Esophagus muscularis mucosa (tissue), 4 donors: ENCODE measurements at regions of chr18 and their contacts with region 1.

Region 1: GRCh38 chr18:26226229-26227005 is at the start of gene TAF4B:
- DNase-seq: peak; percentile 99
- H3K4me3 ChIP-seq: peak within 1 kb of the TSS; percentile 66 to 89 (median 80)
- H3K27ac ChIP-seq: peak within 1 kb of the TSS; percentile 79 to 91 (median 84)
- H3K4me1 ChIP-seq: peaks cover 0 to 33% (median 28%) of the 10 kb centered on the region in 4 donors
- H3K27me3 ChIP-seq: no peaks in the 10 kb centered on the region
- CTCF ChIP-seq: peak in 1 of 3 experiments; percentile 7
- EP300 ChIP-seq: no peak
- POLR2A ChIP-seq: no peak
- total RNA-seq, gene TAF4B: 5.2 to 14.1 (median 8.1) TPM

Region 2: DNA sequence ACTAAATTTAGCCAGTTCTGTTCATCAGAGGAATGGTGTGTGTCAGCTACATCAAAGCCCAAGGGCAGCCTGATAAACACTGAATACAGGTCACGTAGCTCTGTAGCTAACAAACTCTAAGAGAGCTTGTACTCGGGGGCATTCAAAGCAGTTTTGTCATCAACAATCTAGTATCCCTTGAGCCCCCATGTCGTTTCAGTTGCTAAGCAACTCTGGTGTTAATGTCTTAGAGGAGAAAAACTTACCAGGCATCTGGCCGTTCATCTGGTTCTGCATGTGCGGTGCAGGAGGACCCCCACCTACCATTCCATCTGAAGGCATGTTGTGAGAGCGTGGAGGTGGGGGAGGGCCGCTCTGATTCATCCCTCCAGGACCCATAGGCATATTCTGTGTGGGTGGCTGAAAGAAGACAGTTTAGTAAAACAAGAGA is 169.1 kb before region 1 on chr18:
- intact Hi-C with region 1: no loop called
- DNase-seq: no peak
- H3K4me3 ChIP-seq: no peak overlapping the region
- H3K27ac ChIP-seq: no peak overlapping the region
- H3K4me1 ChIP-seq: peaks cover 0 to 4% (median 0%) of the 10 kb centered on the region in 4 donors
- H3K27me3 ChIP-seq: no peaks in the 10 kb centered on the region
- CTCF ChIP-seq: no peak
- EP300 ChIP-seq: no peak
- POLR2A ChIP-seq: no peak

Region 3: GRCh38 chr18:26090130-26091046 is 136.0 kb before region 1 on chr18 and contains the start of gene SS18:
- intact Hi-C with region 1: loop called (anchors 2 kb)
- DNase-seq: peak; percentile 97
- H3K4me3 ChIP-seq: peak within 1 kb of the TSS; percentile 80 to 96 (median 84)
- H3K27ac ChIP-seq: peak within 1 kb of the TSS; percentile 95 to 98 (median 96)
- H3K4me1 ChIP-seq: peaks cover 18 to 34% (median 31%) of the 10 kb centered on the region in 4 donors
- H3K27me3 ChIP-seq: no peaks in the 10 kb centered on the region
- CTCF ChIP-seq: peak in 1 of 3 experiments; percentile 21
- EP300 ChIP-seq: no peak
- POLR2A ChIP-seq: peak; percentile 49
- total RNA-seq, gene SS18: 74.1 to 166 (median 84.3) TPM

Region 4: GRCh38 chr18:26422472-26423162 is 196.2 kb after region 1 on chr18:
- intact Hi-C with region 1: no loop called
- DNase-seq: peak; percentile 64
- H3K4me3 ChIP-seq: no peak overlapping the region
- H3K27ac ChIP-seq: no peak overlapping the region
- H3K4me1 ChIP-seq: no peaks in the 10 kb centered on the region
- H3K27me3 ChIP-seq: no peaks in the 10 kb centered on the region
- CTCF ChIP-seq: no peak
- EP300 ChIP-seq: no peak
- POLR2A ChIP-seq: no peak

Region 5: DNA sequence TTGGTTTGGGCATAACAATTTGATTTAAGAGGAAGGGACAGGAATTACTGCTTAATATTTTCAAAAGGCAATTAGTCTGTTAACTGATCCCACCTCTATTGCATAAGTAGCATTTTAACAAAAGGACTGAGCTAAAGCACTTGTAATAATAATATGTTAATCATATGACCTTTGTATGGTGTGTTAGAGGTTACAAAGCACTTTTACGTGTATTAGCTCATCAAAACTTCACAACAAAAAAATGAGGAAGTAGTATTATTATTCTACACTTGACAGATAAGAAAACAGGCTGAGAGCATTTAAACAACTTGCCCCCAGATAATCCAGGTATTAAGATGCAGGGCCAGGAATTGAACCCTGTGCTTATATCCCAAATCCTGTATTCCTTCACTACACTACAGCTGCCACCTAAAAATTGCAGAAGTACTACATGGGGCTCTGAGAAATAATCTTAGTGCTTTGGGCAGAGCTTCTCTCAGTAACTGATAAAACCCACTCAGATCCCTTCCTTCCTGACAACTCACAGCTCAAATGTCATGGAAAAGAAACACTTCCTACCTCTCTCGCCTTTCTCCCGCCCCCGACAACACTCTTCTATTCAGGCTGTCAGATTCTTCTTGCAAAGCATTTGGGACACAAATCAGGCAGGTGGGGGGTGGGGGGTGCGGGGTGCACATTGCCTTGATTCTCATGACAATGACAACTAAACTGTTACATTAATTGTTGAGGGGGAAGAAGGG is 342.7 kb after region 1 on chr18:
- intact Hi-C with region 1: no loop called
- DNase-seq: no peak
- H3K4me3 ChIP-seq: no peak overlapping the region
- H3K27ac ChIP-seq: no peak overlapping the region
- H3K4me1 ChIP-seq: no peaks in the 10 kb centered on the region
- H3K27me3 ChIP-seq: no peaks in the 10 kb centered on the region
- CTCF ChIP-seq: no peak
- EP300 ChIP-seq: no peak
- POLR2A ChIP-seq: no peak